ENCODE measurements at regions of chr5 and their contacts with region 1.

Region 1: DNA sequence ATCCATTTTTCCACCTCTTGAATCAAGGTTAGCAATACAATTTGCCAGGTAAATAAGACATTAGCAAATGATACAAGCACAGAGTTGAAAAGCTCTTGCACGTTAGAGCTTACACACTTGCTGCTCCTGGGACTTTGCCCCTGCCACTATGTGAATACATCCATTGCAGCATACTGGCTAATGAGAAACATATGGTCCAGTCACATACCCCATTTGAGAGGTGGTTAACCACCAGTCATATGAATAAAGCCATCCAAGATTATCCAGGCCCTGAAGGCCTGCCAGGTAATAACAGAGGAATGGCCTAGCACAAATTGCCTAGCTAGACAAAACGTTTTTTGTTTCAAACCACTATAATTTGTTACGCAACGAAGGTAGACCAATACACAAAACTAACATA is 45.8 kb upstream of the FTMT start:
- DNase-seq: no peak
- ATAC-seq: no peak
- H3K4me3 ChIP-seq: no peak overlapping the region
- H3K4me3 Mint-ChIP-seq: no peak overlapping the region
- H3K27ac ChIP-seq: no peak overlapping the region
- H3K27ac Mint-ChIP-seq: no peak overlapping the region
- H3K4me1 ChIP-seq: no peaks in the 10 kb centered on the region
- H3K4me1 Mint-ChIP-seq: no peaks in the 10 kb centered on the region
- H3K27me3 ChIP-seq: no peaks in the 10 kb centered on the region
- H3K27me3 Mint-ChIP-seq: no peaks in the 10 kb centered on the region
- CTCF ChIP-seq: no peak

Region 2: DNA sequence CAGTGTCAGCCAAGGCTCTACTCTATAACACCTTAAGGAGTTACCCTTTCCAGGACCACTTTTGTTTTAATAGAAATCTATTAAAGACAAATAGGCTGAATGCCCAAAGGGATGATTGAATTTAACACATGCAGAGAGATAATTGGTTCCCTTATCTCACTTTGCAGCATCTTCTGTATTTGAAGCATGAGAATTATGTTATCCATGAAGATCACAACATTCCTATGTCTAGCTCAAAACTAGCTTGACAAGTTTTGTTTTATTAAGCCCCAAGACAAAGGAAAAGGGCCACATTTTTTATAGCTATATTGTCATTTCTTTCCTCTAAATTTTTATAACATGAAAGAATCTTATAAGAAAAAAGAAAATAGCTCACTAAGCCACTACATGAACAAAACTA is 12.1 kb before region 1 on chr5:
- CTCF ChIA-PET with region 1: no interaction called
- POLR2A ChIA-PET with region 1: no interaction called
- intact Hi-C with region 1: loop called (anchors 1 kb)
- DNase-seq: no peak
- ATAC-seq: no peak
- H3K4me3 ChIP-seq: no peak overlapping the region
- H3K4me3 Mint-ChIP-seq: no peak overlapping the region
- H3K27ac ChIP-seq: no peak overlapping the region
- H3K27ac Mint-ChIP-seq: no peak overlapping the region
- H3K4me1 ChIP-seq: no peaks in the 10 kb centered on the region
- H3K4me1 Mint-ChIP-seq: no peaks in the 10 kb centered on the region
- H3K27me3 ChIP-seq: no peaks in the 10 kb centered on the region
- H3K27me3 Mint-ChIP-seq: no peaks in the 10 kb centered on the region
- CTCF ChIP-seq: no peak